Activated T-helper 1 cell treated with anti-CD3 and anti-CD28 coated beads, Interleukin-12 subunit alpha, Interleukin-12 subunit beta, Interleukin-2, Interleukin-4 antibody, amounts not matched to agents 30 ng/mL and 10 ng/mL and 1 ng/mL, durations not matched to agents 14 hours and 24 hours and 36 hours (primary cell): ENCODE measurements at regions of chr1 and their contacts with region 1.

Region 1: DNA sequence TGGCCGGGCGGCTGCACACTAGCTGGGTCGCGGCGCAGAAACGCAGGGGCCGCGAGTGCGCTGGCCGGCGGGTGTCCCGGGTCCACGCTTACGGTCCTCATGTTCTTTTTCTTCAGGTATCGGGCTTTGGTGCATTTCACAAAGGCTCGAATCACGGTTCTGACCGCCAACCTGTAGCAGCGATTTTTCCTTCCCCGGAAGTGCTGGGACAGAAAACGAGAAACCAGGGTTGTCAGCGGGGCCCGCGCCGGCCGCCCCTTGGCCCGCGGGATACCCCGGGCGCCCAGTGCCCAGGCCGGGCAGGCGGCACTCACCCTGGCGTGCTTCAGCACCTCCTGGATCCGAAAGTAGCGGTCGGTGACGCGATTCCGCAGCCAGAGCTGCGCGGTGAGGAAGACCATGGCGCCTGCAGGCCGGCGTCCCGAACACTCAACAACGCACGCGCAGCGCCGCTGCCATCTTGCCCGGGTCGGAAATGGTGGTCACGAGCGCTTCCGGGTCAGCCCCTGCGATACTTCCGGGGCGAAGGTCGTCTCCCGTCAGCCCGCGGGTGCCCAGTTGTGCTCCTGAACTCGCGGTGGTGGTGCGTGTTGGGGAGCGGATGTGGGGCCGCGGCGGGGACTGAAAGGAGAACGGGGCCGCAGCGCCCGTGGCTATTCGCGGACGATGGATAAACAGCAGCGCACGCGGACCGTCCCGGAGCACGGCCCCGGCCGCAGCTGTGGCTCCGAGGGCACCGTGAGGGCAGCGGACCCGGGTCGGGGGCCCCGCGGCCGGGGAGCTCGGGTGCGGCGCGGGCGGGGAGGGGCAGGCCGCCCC is at the start of gene MRPL20:
- DNase-seq: peak; percentile 96
- H3K4me3 Mint-ChIP-seq: peak within 1 kb of the TSS; percentile 95
- H3K27ac Mint-ChIP-seq: peak within 1 kb of the TSS; percentile 94
- H3K4me1 Mint-ChIP-seq: peaks cover 15% of the 10 kb centered on the region
- H3K27me3 Mint-ChIP-seq: peaks cover 2% of the 10 kb centered on the region
- total RNA-seq, gene MRPL20: 184 and 205 TPM in 2 replicates

Region 2: GRCh38 chr1:1273512-1274298 is 133.3 kb before region 1 on chr1 and contains the start of gene UBE2J2:
- intact Hi-C with region 1: loop called (anchors 5 kb)
- DNase-seq: peak; percentile 86
- H3K4me3 Mint-ChIP-seq: peak within 1 kb of the TSS; percentile 90
- H3K27ac Mint-ChIP-seq: peak within 1 kb of the TSS; percentile 63
- H3K4me1 Mint-ChIP-seq: peaks cover 40% of the 10 kb centered on the region
- H3K27me3 Mint-ChIP-seq: no peaks in the 10 kb centered on the region
- total RNA-seq, gene UBE2J2: 95.6 and 99.5 TPM in 2 replicates

Region 3: DNA sequence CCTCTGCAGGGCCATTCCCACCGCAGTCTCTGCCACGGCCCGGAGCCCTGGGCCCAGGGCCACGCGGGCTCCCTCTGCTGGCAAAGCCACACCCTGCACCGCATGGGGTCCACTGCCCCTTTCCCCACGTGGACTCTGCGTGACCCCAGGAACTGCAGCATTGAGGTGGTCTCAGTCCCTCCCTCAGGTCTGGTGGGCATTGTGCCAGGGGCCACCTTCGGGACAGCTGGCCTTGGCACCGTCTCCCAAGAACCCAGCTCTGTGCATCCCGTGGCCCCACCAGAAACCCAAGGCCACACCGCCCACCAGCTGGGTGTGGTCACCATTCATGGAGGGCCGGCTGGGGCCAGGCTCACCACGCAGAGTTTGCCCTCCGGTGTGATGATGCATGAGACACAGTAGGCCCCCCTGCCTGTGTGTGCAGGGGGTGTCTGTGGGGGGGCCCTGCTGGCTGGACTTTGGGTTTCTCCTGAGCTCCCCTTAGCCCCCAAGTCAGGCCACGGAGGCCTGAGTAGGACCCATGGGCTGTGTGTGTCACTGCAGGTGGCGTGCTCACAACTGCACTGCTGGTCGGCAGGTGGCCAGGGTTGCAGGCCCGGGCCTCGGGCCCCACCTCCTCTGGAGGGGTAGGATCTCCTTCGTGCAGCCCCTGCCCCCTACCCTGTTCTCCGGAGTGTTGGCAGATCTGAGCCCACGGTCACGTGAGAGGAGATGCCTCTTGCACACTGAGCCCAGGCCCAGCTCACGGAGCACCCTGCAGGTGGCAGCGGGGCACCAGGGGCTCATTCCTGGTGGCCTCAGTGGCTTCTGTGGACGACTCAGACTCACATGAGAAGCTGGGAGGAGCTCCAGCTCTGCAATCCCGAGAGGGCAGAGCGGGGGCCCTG is 34.2 kb after region 1 on chr1:
- intact Hi-C with region 1: loop called (anchors 2 kb)
- DNase-seq: peak; percentile 30
- H3K4me3 Mint-ChIP-seq: no peak overlapping the region
- H3K27ac Mint-ChIP-seq: no peak overlapping the region
- H3K4me1 Mint-ChIP-seq: no peaks in the 10 kb centered on the region
- H3K27me3 Mint-ChIP-seq: peaks cover 2% of the 10 kb centered on the region

Region 4: GRCh38 chr1:1471389-1472052 is 64.5 kb after region 1 on chr1 and contains the start of gene ATAD3B:
- intact Hi-C with region 1: loop called (anchors 2 kb)
- DNase-seq: peak; percentile 92
- H3K4me3 Mint-ChIP-seq: peak within 1 kb of the TSS; percentile 88
- H3K27ac Mint-ChIP-seq: peak within 1 kb of the TSS; percentile 86
- H3K4me1 Mint-ChIP-seq: peaks cover 10% of the 10 kb centered on the region
- H3K27me3 Mint-ChIP-seq: no peaks in the 10 kb centered on the region
- total RNA-seq, gene ATAD3B: 106 and 113 TPM in 2 replicates